CD14-positive monocyte (primary cell): ENCODE measurements at regions of chr1 and their contacts with region 1.

Region 1: GRCh38 chr1:109850194-109850593 is 60.5 kb upstream of the CSF1 start:
- DNase-seq: no peak
- H3K4me3 ChIP-seq: no peak overlapping the region
- H3K4me3 Mint-ChIP-seq: no peak overlapping the region
- H3K27ac ChIP-seq: no peak overlapping the region
- H3K27ac Mint-ChIP-seq: peak overlapping the region in 1 of 7 donors; percentile 5
- H3K4me1 ChIP-seq: no peaks in the 10 kb centered on the region
- H3K4me1 Mint-ChIP-seq: peaks cover 7% of the 10 kb centered on the region
- H3K27me3 ChIP-seq: no peaks in the 10 kb centered on the region
- H3K27me3 Mint-ChIP-seq: peaks cover 2 to 5% (median 4%) of the 10 kb centered on the region in 3 donors
- CTCF ChIP-seq: no peak

Region 2: GRCh38 chr1:109643385-109644230 is 206.6 kb before region 1 on chr1:
- intact Hi-C with region 1: no loop called
- DNase-seq: peak; percentile 59 to 75 (median 70)
- H3K4me3 ChIP-seq: no peak overlapping the region
- H3K4me3 Mint-ChIP-seq: peak overlapping the region in 1 of 2 donors; percentile 51
- H3K27ac ChIP-seq: no peak overlapping the region
- H3K27ac Mint-ChIP-seq: no peak overlapping the region
- H3K4me1 ChIP-seq: peaks cover 7 to 14% of the 10 kb centered on the region in 2 donors
- H3K4me1 Mint-ChIP-seq: peaks cover 16% of the 10 kb centered on the region
- H3K27me3 ChIP-seq: no peaks in the 10 kb centered on the region
- H3K27me3 Mint-ChIP-seq: peaks cover 3 to 7% (median 4%) of the 10 kb centered on the region in 3 donors
- CTCF ChIP-seq: peak; percentile 93

Region 3: DNA sequence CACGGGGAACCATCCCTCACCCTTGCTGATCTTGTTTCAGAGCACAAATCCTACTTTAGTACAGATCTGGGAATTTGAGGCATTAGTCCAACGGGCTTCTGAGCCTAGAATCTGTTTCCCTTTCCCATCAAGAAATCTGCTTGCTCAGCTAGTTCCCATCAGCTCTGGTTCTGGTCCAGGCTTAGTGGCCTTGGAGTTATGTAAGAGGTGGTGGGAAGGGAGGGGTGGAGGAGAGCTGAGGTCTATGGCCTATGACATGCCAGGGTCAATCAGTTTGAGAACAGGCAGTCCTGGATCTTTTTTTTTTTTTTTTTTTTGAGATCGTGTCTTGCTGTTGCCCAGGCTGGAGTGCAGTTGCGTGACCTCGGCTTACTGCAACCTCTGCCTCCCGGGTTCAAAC is 158.4 kb before region 1 on chr1:
- intact Hi-C with region 1: no loop called
- DNase-seq: no peak
- H3K4me3 ChIP-seq: no peak overlapping the region
- H3K4me3 Mint-ChIP-seq: no peak overlapping the region
- H3K27ac ChIP-seq: no peak overlapping the region
- H3K27ac Mint-ChIP-seq: no peak overlapping the region
- H3K4me1 ChIP-seq: peaks cover 0 to 10% of the 10 kb centered on the region in 2 donors
- H3K4me1 Mint-ChIP-seq: no peaks in the 10 kb centered on the region
- H3K27me3 ChIP-seq: no peaks in the 10 kb centered on the region
- H3K27me3 Mint-ChIP-seq: no peaks in the 10 kb centered on the region
- CTCF ChIP-seq: no peak

Region 4: DNA sequence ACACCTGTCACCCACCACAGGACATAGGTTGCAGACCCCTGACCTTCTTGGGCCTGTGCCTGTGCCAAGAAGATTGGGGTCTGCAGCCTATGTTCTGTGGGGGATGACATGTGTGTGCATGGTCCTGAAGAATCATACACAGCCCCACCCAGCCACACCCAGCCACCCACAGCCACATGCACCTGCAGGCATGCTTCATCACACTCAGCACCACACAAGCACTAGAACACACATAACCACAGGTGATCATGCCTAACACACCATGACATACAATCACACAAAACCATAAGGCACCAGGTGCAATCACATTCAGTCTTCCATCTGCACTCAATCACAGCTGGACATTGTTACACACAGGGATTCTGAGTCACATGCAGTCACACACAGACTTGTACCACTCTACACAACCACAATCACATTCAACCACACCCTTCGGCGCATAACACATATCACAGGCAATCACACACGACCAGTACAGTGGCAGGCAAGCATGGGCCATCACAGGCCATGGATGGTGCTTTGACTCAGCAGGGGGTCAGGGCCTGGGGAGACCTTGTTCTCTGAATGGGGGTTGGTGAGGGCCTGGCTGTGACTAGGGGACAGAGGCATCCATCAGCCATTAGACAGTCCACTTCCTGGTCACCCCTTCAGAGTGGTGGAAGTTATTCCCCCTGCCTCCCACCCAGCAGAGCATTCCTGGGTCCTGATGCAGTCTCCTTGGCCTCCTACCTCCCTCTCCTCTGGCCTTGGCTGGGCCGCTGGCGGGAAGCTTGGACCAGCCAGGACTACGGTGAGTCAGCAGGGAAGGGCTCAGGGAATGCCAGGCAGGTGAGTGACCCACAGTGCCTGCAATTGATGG is 42.1 kb before region 1 on chr1:
- intact Hi-C with region 1: loop called in 1 of 2 experiments (anchors 5 kb)
- DNase-seq: no peak
- H3K4me3 ChIP-seq: no peak overlapping the region
- H3K4me3 Mint-ChIP-seq: no peak overlapping the region
- H3K27ac ChIP-seq: no peak overlapping the region
- H3K27ac Mint-ChIP-seq: peak overlapping the region in 1 of 7 donors; percentile 9
- H3K4me1 ChIP-seq: peaks cover 7 to 11% of the 10 kb centered on the region in 2 donors
- H3K4me1 Mint-ChIP-seq: peaks cover 20% of the 10 kb centered on the region
- H3K27me3 ChIP-seq: no peaks in the 10 kb centered on the region
- H3K27me3 Mint-ChIP-seq: peaks cover 2 to 3% (median 2%) of the 10 kb centered on the region in 3 donors
- CTCF ChIP-seq: no peak

Region 5: DNA sequence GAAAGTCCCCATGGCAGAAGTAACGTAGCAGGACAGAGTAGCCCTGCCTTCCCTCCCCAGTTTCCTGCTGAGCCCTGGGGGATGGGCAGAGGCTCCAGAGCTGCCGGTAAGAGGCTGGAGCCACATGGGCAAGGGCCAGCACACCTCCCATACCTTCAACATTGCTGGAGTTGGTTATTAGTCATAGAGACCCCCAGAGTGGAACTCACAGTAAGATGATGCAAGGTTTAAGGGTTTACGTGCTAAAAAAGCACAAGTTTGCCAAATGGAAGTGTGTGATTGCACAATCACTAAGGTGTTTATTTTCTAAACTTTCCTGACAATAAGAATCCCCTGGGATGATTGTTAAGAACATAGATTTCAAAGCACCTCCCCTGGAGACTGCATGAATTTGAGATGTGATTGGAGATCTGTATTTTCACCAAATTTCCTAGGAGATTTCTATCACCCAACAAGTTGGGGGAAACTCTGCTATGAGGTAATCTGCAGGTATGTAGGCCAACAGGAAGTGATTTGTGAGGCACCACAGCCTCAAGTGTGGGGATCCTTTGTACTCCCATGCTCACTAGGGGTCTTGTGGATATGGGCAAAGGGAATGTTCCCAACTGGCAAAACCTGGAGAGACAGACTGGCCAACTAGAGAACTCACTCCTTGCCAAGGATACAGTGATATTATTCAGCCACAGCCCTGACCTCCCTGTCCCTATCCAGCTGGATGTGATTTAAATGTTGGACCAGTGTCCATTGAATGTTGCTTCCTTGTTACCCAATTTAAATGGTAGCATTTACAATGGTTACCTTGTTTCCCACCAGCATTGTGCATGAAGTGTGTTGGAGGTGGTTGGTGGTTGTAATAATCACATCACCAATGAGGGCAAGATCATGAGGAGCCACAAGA is 23.3 kb after region 1 on chr1:
- intact Hi-C with region 1: loop called in 1 of 2 experiments (anchors 2 kb)
- DNase-seq: peak in 1 of 3 donors; percentile 34
- H3K4me3 ChIP-seq: no peak overlapping the region
- H3K4me3 Mint-ChIP-seq: peak overlapping the region in 1 of 2 donors; percentile 16
- H3K27ac ChIP-seq: no peak overlapping the region
- H3K27ac Mint-ChIP-seq: peak overlapping the region in 1 of 7 donors; percentile 16
- H3K4me1 ChIP-seq: no peaks in the 10 kb centered on the region
- H3K4me1 Mint-ChIP-seq: no peaks in the 10 kb centered on the region
- H3K27me3 ChIP-seq: no peaks in the 10 kb centered on the region
- H3K27me3 Mint-ChIP-seq: peaks cover 2 to 9% (median 5%) of the 10 kb centered on the region in 3 donors
- CTCF ChIP-seq: no peak